ENCODE measurements at regions of chr17 and their contacts with region 1.

Region 1: GRCh38 chr17:76307299-76307965 is 644 bp downstream of the QRICH2 start:
- DNase-seq: no peak
- ATAC-seq: no peak
- H3K4me3 ChIP-seq: no peak overlapping the region
- H3K27ac ChIP-seq: no peak overlapping the region
- H3K4me1 ChIP-seq: peaks cover 5% of the 10 kb centered on the region; the same call in 1 of the 2 replicates
- H3K27me3 ChIP-seq: no peaks in the 10 kb centered on the region
- CTCF ChIP-seq: no peak

Region 2: DNA sequence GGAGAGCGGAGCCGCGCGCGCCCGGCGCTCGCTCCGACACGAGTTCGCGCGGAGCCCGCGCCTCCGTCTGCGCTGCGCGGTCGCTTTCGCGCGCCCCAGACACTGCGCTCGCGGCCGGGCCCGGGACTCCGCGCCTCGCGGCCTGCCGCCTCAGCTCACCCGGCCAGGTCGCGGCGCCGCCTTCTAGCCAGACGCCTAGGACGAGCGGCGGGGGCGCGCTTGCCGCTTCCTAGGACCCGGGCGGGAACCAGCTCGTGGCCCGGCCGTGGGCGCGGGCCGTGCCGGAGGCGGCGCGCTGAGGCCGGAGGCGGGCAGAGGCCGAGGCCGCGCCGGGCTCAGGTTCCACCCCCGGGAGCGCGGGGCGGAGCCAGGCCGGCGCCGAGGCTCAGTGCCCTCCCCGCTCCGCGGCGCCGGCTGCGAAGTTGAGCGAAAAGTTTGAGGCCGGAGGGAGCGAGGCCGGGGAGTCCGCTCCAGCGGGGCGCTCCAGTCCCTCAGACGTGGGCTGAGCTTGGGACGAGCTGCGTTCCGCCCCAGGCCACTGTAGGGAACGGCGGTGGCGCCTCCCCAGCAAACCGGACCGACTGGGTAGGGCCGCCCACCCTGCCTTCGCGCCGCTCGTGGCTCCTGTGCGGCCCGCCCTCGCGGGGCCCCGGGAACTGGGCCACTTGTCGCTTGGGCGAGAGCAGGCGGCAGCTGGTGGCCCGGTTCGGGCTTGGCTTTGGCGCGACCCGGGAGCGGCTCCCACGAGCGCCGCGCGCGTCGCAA is 77.0 kb after region 1 on chr17 and contains the start of gene SPHK1:
- CTCF ChIA-PET with region 1: interaction called, 11 read pairs
- POLR2A ChIA-PET with region 1: no interaction called
- in situ Hi-C with region 1: no loop called
- intact Hi-C with region 1: no loop called
- DNase-seq: no peak
- ATAC-seq: peak; percentile 84
- H3K4me3 ChIP-seq: peak within 1 kb of the TSS; percentile 59 to 69
- H3K27ac ChIP-seq: peak within 1 kb of the TSS; percentile 79
- H3K4me1 ChIP-seq: peaks cover 13% of the 10 kb centered on the region; the same call in 1 of the 2 replicates
- H3K27me3 ChIP-seq: no peaks in the 10 kb centered on the region
- CTCF ChIP-seq: no peak
- total RNA-seq, gene SPHK1: 18.2 TPM

Region 3: DNA sequence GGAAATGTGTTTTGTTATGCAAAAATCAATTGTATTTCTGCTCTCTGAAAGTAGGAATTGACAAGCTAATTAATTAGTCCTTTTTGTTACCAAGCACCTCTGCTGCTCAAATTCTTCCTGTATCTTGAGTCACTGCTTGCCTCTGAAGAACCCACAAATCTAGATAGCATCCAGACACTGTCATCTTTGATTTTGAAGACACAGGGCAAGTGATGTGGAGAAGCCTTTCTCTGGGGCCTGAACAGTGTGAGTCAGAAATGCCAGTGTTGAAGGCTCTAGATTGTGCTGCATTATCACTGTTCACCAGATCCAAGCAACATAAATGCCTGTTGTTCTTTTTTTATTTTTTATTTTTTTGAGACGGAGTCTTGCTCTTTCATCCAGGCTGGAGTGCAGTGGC is 347.0 kb after region 1 on chr17:
- CTCF ChIA-PET with region 1: no interaction called
- POLR2A ChIA-PET with region 1: no interaction called
- in situ Hi-C with region 1: no loop called
- intact Hi-C with region 1: no loop called
- DNase-seq: no peak
- ATAC-seq: no peak
- H3K4me3 ChIP-seq: no peak overlapping the region
- H3K27ac ChIP-seq: no peak overlapping the region
- H3K4me1 ChIP-seq: peaks cover 13% of the 10 kb centered on the region
- H3K27me3 ChIP-seq: no peaks in the 10 kb centered on the region
- CTCF ChIP-seq: no peak